Ascending aorta (tissue), 2 donors: ENCODE measurements at regions of chr9 and their contacts with region 1.

Region 1: GRCh38 chr9:68584189-68585033 is 43.7 kb upstream of the TMEM252 start:
- DNase-seq: peak; percentile 40 to 88
- H3K4me3 ChIP-seq: no peak overlapping the region
- H3K27ac ChIP-seq: no peak overlapping the region
- H3K4me1 ChIP-seq: no peaks in the 10 kb centered on the region
- H3K27me3 ChIP-seq: no peaks in the 10 kb centered on the region
- CTCF ChIP-seq: peak; percentile 94 to 99 (median 96)

Region 2: DNA sequence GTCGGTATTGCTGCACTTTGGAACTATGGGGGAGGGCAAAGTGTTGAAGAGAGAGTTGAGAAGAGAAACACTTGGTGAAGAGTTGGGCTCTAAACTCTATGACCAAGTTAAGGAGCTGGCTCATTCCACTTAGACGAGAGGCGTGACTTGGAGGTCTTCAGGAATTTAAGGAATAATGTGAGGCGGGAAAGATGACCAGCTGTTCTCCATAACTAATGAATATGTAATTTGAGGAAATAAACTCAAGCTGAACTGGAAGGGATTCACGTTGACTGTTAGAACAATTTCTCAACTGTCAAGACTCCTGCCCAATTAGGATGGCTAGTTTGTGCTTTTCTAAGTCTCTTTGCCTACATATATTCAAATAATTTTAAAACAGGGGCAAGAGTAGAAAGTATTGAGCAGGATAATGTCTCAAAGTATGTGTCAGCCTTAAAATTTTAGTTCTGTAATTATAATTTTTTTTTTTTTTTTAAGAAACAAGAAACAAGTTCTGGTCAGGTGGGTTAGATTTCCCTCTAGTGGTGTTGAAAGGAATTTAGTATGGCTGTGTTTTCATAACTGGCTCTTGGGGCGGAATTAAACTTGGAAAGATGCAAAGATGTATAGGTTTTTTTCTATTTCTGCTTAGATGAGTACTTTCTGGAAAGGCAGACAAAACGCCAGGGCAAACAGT is 77.1 kb before region 1 on chr9:
- intact Hi-C with region 1: no loop called
- DNase-seq: no peak
- H3K4me3 ChIP-seq: no peak overlapping the region
- H3K27ac ChIP-seq: peak overlapping the region; percentile 86 to 88
- H3K4me1 ChIP-seq: peaks cover 0 to 23% of the 10 kb centered on the region in 2 donors
- H3K27me3 ChIP-seq: no peaks in the 10 kb centered on the region
- CTCF ChIP-seq: peak; percentile 58 to 80 (median 78)

Region 3: DNA sequence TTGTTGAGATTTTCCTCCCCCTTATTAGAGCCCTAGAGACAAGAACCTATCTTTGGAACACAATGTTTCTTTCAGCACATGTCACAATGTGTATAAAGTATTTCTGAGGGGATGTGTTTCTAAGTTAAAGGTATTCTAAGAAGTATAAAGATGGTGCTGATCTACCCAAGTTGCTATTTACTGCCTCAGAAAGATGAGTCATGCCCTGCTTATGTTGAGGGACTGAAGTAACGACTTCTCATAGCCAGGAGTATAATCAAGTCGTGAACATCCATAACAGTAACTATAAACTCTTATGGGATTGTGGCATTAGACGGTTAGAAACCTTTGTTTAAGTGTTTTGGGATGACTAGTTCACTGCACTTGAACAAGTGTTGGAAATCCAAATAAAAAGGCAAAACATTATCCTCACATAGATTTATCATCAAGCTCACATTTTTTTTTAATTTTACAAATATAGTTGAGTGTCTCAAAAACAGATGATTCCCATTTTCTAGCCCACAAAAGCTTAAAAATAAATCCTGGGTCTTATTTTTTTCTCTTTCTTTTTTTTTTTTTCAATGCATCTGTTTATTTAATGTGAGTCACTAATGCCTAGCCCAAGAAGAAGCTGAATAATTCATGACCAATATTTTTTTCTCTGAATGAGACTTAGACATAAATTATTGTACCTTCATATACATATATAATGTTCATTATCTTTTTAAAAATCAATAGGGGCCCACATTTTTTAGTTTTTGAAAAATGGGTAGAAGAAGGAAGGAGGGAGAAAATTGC is 31.5 kb before region 1 on chr9:
- intact Hi-C with region 1: no loop called
- DNase-seq: no peak
- H3K4me3 ChIP-seq: no peak overlapping the region
- H3K27ac ChIP-seq: no peak overlapping the region
- H3K4me1 ChIP-seq: peaks cover 0 to 2% of the 10 kb centered on the region in 2 donors
- H3K27me3 ChIP-seq: no peaks in the 10 kb centered on the region
- CTCF ChIP-seq: no peak

Region 4: GRCh38 chr9:68637020-68637419 is 52.6 kb after region 1 on chr9:
- intact Hi-C with region 1: loop called (anchors 10 kb)
- DNase-seq: no peak
- H3K4me3 ChIP-seq: no peak overlapping the region
- H3K27ac ChIP-seq: no peak overlapping the region
- H3K4me1 ChIP-seq: no peaks in the 10 kb centered on the region
- H3K27me3 ChIP-seq: no peaks in the 10 kb centered on the region
- CTCF ChIP-seq: no peak

Region 5: DNA sequence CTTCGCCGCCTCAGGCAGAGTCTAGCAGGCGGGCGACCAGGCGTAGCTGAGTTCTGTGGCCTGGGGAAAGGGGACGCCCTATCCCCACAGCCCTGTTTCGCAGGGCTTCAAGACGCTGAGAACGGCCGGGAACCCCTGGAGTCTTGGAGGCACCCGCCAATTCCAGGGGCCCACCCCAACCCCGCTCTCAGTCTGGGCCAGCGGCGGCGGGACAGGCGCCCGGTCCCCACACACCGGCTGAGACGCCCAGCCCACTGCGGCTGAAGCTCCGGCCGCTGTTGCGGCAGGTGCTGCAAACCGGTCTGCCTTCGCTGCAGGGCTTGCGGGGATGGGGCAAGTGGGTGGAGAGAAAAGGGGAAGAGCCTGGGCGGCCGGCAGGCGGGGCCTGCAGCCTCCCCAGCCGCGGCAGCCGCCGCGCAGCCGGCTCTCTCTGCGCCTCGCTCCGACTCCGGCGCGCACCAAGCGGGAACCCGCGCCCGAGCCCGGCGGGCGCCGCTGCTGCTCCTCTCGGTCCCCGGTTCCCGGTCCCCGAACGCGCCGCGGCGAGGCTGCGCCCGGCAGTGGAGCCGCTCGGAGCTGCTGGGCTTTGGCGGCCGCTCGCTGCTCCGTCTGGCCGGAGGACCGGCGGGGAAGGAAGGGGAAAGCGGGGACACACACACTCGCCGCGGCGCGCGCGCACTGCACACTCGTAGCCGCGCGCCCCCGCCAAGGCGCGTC is 120.6 kb after region 1 on chr9 and contains the start of gene PIP5K1B:
- intact Hi-C with region 1: loop called (anchors 10 kb)
- DNase-seq: peak in 1 of 2 donors; percentile 72
- H3K4me3 ChIP-seq: peak within 1 kb of the TSS; percentile 78 to 88
- H3K27ac ChIP-seq: peak within 1 kb of the TSS; percentile 30 to 81
- H3K4me1 ChIP-seq: no peaks in the 10 kb centered on the region
- H3K27me3 ChIP-seq: no peaks in the 10 kb centered on the region
- CTCF ChIP-seq: peak in 1 of 3 experiments; percentile 21
- total RNA-seq, gene PIP5K1B: 0.85 TPM

Region 6: DNA sequence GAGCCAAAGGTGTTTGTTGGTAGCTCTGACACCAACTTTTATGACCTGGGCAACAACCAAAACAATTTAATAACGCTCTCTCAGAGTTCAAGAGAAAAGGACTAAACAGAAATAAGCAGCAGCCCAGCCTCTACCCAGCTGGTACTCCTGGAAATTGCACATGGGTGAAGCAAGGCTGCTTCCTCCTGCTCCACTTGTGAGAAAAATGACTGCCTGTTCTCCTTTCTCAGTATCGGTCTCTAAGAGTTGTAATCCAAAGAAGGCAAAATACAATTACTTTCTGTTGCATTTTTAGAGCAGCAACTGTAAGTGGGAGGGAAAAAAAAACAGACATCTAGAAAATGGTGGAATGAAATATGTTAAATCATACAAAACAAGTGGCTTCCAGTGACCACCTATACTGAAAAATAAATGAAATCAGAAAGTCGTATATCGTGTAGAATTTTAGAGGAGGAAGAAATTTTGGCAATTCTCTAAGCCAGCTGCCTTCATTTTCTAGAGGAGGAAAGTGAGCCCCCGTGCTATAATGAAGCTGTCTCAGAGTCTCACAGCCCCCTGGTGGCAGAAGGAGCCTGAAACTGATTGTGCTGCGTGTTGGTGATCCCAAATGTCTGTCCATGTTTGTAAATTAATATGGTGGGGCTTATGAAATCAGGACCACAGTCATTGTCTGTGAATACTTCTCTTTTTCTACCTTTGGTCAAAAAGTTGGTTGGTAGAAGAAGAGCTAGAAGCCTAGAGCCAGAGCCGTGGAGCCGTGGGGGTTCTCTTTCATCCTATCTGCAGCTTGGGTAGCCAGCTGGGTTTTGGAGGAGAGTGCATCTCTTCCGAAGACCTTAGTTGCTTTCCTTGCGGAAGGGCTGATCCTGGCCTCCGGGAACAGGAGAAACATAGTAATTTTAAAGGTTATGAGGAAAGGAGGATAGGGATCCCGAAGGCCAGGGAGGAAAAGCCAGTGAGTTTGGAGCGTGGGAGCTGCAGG is 260.5 kb after region 1 on chr9:
- intact Hi-C with region 1: loop called (anchors 1 kb)
- DNase-seq: peak in 1 of 2 donors; percentile 77
- H3K4me3 ChIP-seq: no peak overlapping the region
- H3K27ac ChIP-seq: no peak overlapping the region
- H3K4me1 ChIP-seq: peaks cover 0 to 16% of the 10 kb centered on the region in 2 donors
- H3K27me3 ChIP-seq: no peaks in the 10 kb centered on the region
- CTCF ChIP-seq: peak; percentile 34 to 60 (median 52)

Region 7: DNA sequence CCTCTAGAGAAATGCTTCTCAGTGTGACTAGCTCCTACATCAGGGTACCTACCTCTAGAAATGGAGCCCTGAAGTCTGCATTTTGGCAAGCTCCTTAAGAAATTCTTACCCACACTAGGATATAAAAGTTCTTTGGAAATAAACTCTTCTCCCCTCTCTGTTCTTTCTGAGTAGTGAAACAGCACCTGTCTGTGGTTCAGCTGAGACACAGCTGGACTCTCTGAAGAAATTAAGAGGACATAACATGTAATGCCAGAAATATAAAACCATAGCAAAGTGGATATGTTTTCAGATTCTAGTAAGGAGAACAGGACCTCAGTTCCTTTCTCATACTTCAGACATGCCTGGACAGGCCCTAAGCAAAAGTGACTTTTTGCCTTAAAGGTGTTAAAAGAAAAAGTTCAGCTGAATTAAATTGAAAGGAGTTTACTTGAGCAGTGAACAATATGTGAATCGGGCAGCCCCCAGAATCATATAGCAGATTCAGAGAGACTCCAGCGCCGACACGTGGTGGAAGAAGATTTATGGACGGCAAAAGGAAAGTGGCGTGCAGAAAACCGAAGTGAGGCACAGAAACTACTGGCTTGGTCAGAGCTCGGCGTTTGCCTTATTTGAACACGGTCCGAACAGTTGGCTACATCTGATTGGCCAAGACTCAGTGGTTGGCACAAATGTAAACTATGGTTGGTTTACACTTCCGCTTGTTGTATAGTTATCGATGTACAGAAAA is 365.0 kb after region 1 on chr9:
- intact Hi-C with region 1: loop called (anchors 1 kb)
- DNase-seq: no peak
- H3K4me3 ChIP-seq: peak overlapping the region in 1 of 2 donors; percentile 4
- H3K27ac ChIP-seq: no peak overlapping the region
- H3K4me1 ChIP-seq: no peaks in the 10 kb centered on the region
- H3K27me3 ChIP-seq: no peaks in the 10 kb centered on the region
- CTCF ChIP-seq: peak in 1 of 3 experiments; percentile 35

Region 8: DNA sequence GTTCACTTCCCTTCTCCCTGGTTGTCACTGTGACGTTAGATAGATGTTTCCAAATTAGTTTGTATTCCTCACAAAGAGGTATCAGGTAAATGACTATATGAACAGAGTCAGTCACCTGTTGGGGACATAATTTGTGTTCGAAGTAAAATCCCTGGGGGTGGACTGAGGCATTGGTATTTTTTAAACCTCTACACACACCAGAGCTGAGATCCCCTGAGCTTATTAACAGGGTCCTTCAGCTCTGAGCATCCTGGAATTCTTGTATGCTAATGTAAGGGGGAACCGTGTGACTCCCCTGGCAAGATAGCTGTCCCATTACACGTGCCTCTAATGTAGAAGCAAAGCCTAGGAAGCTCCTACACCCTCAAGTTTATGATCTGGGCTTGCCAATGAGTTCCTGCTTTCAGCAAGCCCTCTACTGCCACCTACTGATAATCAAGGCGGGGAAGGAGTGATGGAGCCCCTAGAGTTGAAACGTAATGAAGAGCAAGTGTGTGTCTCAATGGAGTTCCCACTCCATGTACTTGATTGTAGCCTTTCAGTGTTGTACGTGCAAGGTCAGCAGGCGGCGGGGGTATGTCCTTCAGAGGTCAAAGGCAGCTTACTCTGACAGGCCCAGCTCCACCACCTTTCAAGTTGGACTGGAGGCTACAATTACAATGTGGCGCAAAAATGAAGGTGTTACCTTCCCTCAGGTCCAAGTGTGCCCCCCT is 415.1 kb after region 1 on chr9:
- intact Hi-C with region 1: loop called (anchors 1 kb)
- DNase-seq: peak in 1 of 2 donors; percentile 80
- H3K4me3 ChIP-seq: no peak overlapping the region
- H3K27ac ChIP-seq: no peak overlapping the region
- H3K4me1 ChIP-seq: no peaks in the 10 kb centered on the region
- H3K27me3 ChIP-seq: no peaks in the 10 kb centered on the region
- CTCF ChIP-seq: peak; percentile 46 to 81 (median 68)